Right cardiac atrium (tissue), 5 donors: ENCODE measurements at regions of chr6 and their contacts with region 1.

Region 1: DNA sequence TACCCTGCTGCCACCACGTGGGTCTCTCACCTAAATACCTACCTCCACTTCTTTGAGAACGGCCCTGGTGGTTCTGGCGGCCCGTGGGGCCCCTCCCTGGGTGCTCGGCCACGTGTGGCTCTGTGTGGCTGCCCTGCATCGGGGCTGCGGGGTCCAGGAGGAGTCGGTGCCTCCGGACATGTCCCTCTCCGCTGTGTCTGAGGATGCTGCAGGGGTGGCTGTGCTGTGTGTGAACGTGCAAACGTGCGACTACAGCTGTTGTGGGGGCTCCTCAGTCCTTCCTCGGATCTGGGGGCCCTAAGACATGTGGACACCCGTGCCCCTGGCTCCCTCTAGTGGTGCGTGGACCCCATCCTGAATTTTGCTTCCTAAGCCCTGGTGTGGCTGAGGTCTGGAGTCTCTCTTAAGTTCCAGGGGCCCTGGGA is 691.8 kb downstream of the QKI start:
- DNase-seq: peak; percentile 63 to 86 (median 80)
- ATAC-seq: peak; percentile 44 to 49
- H3K4me3 ChIP-seq: no peak overlapping the region
- H3K27ac ChIP-seq: peak overlapping the region; percentile 94
- H3K4me1 ChIP-seq: peaks cover 9% of the 10 kb centered on the region
- H3K27me3 ChIP-seq: no peaks in the 10 kb centered on the region

Region 2: DNA sequence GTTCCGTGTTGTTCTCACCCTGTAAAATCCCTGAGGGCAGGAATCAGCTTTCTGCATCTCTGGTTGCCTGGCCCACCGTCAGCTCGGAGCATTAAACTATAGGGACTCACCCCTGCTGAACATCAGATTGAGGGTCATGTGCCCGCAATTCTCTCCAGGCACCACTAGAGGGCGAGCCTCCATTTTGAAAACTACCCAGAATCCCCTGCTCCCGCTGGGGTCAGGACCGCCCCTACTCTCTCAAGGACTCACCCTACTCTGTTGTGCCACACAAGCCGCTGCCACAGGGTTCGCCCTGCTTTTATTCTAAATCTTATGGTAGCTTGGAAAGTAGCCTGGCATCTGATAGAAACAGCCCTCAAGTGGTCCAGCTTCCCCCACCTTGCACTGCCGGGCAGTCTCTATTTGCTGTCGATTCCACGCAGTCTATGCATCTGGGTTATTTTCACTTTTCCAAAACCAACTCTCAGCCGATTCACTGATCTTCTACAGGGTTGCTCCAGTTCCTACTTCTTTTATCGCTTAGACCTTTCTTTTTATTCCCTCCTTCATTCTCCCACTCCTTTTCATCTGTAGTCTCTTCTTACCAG is 936.0 kb before region 1 on chr6:
- intact Hi-C with region 1: loop called in 1 of 4 experiments (anchors 10 kb)
- DNase-seq: no peak
- ATAC-seq: peak in 1 of 2 donors; percentile 46
- H3K4me3 ChIP-seq: no peak overlapping the region
- H3K27ac ChIP-seq: no peak overlapping the region
- H3K4me1 ChIP-seq: no peaks in the 10 kb centered on the region
- H3K27me3 ChIP-seq: no peaks in the 10 kb centered on the region

Region 3: DNA sequence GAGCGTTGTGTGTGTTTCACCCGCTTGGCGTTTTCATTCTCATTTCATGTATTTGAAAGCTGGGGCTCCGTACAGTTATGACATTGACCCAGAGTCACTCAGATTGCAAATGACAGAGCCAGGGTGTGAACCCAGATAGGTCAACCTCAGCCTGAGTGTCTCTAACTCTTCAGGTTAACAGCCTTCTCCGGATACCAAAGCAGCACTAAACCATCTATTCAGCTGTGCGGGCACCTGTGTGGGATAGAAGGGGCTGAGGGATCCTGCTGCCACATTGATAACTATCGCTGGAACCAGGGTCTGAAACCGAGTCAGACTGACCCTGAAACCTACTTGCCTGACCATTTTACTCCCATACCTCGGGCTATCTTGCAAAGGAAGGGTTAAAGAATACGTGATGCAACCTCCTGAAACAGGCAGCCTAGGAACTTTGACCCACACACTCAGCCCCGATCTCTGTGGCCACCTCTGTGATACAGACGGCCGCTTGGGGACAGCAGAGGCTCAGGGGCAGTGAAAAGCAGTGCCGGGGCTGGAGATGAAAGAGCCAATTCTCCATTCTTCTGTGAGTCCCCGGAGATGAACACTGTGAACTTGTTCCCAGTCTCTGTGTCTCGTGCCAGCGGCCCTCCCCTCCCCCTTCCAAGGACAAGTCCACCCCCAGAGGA is 925.3 kb before region 1 on chr6:
- intact Hi-C with region 1: loop called in 2 of 4 experiments (anchors 5 to 10 kb)
- DNase-seq: peak; percentile 80 to 92 (median 90)
- ATAC-seq: peak; percentile 96
- H3K4me3 ChIP-seq: no peak overlapping the region
- H3K27ac ChIP-seq: no peak overlapping the region
- H3K4me1 ChIP-seq: peaks cover 3% of the 10 kb centered on the region
- H3K27me3 ChIP-seq: no peaks in the 10 kb centered on the region

Region 4: GRCh38 chr6:163413345-163414116 is 692.8 kb before region 1 on chr6:
- intact Hi-C with region 1: loop called in 3 of 4 experiments (anchors 5 to 10 kb)
- DNase-seq: peak; percentile 88 to 96 (median 96)
- ATAC-seq: peak; percentile 92 to 93
- H3K4me3 ChIP-seq: peak overlapping the region; percentile 100
- H3K27ac ChIP-seq: peak overlapping the region; percentile 99
- H3K4me1 ChIP-seq: no peaks in the 10 kb centered on the region
- H3K27me3 ChIP-seq: no peaks in the 10 kb centered on the region

Region 5: GRCh38 chr6:163427498-163428254 is 678.7 kb before region 1 on chr6:
- intact Hi-C with region 1: loop called in 1 of 4 experiments (anchors 10 kb)
- DNase-seq: peak in 1 of 3 donors; percentile 34
- ATAC-seq: peak; percentile 51 to 63
- H3K4me3 ChIP-seq: no peak overlapping the region
- H3K27ac ChIP-seq: no peak overlapping the region
- H3K4me1 ChIP-seq: peaks cover 12% of the 10 kb centered on the region
- H3K27me3 ChIP-seq: no peaks in the 10 kb centered on the region

Region 6: DNA sequence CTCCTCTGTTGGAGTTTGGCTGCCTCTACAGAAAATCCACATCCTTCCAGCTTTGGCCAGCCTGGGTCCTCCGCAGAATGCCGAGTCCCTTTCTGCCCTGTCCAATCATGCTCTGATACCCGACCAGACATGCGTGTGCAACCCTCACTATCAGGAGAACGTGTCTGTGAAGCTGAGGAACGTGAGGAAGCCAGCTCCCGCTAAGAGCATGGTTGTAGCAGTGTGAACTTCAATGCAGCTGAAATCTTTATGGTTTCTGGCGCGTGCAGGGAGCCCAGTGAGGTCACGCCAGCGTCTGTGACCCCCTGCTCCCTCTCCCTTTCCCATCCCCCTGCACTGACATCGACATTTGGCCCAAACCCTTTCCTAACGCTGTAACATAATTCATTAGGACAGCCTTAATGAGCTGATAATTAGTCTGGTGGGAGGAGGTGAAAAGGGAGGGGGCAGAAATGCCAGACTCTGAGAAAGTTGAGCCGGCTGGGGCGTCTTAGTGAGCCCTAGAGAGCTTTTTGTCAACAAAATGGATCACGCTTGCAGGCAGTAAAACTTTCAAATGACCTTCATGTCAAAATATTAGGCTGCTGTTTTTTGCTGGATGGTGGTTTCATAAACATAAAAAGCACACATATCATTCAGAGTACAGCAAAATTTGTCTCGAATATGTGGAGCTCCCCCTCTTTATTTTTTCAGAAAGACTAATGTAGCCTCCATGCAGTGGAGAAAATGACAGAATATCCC is 268.5 kb before region 1 on chr6:
- intact Hi-C with region 1: loop called in 1 of 4 experiments (anchors 10 kb)
- DNase-seq: peak; percentile 28 to 60 (median 56)
- ATAC-seq: peak; percentile 78 to 83
- H3K4me3 ChIP-seq: no peak overlapping the region
- H3K27ac ChIP-seq: peak overlapping the region; percentile 38
- H3K4me1 ChIP-seq: peaks cover 2% of the 10 kb centered on the region
- H3K27me3 ChIP-seq: no peaks in the 10 kb centered on the region

Region 7: DNA sequence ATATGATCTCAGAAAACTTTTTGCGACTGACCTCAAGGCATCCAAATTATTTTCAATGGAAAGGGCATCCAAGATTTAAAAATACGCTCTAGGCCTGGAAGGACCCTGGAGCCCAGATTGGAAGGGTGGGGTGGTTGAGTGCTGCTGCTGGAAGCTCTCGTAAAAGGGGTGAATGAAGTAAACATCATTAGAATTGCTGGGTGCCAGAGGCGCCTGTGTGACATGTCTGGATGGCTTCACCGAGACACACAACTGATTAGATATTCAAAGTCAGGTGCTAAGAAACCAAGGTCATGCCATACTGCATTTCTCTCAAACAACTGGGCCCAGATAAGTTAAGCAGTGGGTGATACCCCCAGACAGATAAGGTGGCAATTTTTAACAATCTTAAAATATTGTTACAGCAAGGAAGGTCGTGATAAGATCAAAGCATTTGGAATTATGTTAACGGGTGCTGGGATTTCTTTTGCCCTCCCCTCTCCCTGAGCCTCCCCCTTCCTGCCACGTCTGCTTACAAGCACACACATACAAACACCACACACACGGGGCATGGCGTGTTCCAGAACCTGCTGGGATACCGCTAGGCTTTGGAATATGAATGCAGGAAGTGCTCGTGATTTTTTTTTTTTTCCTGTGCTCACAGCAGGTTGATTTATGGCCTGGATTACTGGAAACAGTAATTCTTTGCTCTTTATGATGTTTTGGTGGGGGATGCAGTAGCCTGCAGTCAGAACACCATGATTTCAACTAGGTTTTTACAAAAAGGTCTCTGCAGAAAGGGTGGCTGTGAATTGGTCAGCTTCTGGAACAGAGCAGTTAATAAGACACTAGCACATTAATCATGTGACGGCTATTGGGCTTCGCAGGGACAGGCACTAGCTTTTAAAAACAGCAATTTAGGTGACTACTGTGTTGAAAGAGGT is 140.7 kb before region 1 on chr6:
- intact Hi-C with region 1: loop called (anchors 5 to 10 kb)
- DNase-seq: peak in 2 of 3 donors; percentile 59 to 67
- ATAC-seq: peak; percentile 55 to 64
- H3K4me3 ChIP-seq: no peak overlapping the region
- H3K27ac ChIP-seq: peak overlapping the region; percentile 65
- H3K4me1 ChIP-seq: peaks cover 3% of the 10 kb centered on the region
- H3K27me3 ChIP-seq: no peaks in the 10 kb centered on the region

Region 8: DNA sequence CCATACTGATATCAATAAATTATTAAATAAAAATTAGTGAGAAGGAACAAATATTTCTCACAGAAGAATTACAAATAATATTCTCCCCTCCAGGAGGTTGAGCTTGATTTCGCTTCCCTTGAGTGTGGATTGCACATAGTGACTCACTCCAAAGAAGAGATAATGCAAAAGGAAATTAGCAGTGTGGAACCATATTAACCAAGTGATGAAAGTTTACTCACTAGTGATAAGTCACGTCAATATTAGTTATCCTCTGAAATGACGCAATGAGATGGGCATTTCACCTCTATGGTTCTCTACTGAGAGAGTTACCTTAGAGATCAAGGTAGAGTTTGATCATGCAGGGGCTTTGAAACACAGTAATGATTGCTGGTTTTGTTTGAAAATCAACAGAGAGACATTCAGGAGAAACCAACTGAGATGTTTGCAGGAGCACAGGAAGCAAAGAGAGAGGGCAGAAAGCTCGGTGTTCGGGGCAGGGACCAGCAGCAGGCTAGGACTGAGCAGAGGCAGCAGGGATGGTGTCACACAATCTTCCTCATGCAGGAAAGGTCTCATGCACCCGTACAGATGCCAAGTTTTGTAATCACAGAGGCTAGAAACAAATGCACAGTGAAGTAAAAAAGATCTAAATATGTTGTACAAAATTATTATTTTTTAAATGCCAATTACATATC is 57.4 kb before region 1 on chr6:
- intact Hi-C with region 1: no loop called
- DNase-seq: no peak
- ATAC-seq: peak in 1 of 2 donors; percentile 31
- H3K4me3 ChIP-seq: no peak overlapping the region
- H3K27ac ChIP-seq: no peak overlapping the region
- H3K4me1 ChIP-seq: no peaks in the 10 kb centered on the region
- H3K27me3 ChIP-seq: no peaks in the 10 kb centered on the region

Region 9: GRCh38 chr6:164331026-164331425 is 224.7 kb after region 1 on chr6:
- intact Hi-C with region 1: no loop called
- DNase-seq: no peak
- ATAC-seq: no peak
- H3K4me3 ChIP-seq: no peak overlapping the region
- H3K27ac ChIP-seq: no peak overlapping the region
- H3K4me1 ChIP-seq: no peaks in the 10 kb centered on the region
- H3K27me3 ChIP-seq: no peaks in the 10 kb centered on the region